Left ventricle myocardium superior (tissue), 1 donor: ENCODE measurements at regions of chr2 and their contacts with region 1.

Region 1: DNA sequence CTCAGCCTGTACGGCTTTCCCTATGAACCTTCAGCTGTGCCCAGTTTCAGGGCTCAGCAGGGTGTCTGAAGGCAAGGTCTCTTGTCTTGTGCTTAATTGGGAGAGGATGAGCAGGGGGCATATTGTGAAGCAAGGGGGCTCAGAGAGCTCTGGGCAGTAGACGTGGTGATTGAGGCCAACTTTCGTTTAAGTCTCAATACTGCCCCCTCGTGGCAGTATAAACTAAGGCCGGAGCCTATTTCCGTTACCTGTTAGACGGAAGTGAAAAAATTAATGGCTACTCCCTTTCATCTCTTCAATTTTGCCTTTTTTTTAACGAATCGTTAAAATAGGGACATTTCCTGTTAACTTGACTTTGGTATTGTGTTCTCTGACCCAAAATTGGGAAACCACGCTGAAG is 193.4 kb downstream of the TDRD15 start:
- DNase-seq: peak; percentile 43
- ATAC-seq: peak; percentile 82

Region 2: DNA sequence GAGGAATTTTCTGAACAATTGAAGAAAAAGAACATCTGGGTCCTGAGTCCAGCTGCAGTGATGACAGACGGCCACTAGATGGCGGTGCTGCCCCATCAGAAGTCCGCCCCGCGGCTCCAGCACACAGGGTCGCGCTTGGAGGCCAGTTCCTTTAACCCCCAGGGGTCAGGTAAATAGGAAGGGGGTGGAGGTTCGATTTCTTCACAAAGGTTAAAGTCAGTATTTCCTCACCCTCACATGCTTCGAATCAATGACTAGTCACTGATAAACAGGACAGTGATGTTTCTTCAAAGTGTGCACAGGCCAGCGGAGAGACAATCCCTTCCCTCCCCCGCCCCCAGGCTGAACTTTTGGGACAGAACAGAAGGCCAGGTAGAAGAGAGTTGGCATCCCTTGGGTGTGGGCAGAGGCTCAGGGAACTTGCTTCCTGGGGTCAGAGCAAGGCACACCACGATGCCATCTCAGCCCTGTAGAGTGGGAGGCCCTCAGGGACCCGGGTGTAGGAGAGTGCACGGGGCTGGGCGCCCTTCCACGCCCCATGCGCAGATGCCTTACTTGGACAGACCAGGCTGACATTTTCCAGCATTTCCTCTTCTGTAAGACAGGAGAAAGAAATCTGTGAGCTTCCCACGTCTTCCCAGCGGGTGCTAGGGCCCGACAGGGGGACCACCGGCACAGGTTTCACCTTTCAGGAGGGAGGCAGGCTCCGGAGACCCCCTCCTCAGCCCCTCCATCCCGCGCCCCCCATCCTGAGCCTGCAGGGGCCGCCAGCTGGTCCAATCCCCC is 274.0 kb before region 1 on chr2:
- intact Hi-C with region 1: loop called (anchors 5 kb)
- DNase-seq: peak; percentile 79
- ATAC-seq: peak; percentile 69

Region 3: DNA sequence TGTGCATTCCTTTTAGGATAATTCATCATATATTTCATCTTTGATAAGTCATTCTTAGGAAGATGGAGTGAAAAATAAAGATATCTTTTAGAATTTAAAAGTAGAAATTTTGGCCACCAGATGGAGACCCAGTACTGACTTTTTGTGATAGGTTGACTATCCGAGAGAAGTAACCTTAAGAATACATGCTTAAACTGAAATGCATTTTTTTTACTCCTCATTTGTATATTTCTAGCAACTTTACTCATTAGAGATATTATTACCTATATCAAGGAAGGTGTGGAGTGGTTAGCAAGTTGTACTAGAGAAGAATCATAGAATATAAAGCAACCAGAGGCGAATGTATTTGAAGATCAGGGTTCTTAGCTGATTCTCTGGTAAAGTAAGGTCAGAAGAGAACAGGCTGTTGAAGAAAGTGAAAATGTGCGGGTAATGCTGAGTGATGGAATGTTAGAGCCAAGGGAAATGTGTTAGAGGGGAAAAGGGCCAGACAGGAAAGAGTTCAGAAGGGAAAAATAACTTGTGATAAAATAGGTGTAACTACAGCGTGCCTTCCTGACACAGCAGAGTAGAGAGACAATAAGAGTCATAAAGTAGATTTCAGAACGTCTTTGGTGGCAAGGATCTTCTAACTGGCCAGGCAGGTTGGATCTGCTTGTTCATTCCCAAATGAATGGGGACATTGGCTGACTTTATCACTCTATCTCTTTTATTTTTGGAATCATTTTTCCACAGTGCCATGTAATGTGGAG is 141.1 kb before region 1 on chr2:
- intact Hi-C with region 1: loop called (anchors 2 kb)
- DNase-seq: no peak
- ATAC-seq: peak; percentile 64